Naive thymus-derived CD4-positive, alpha-beta T cell (primary cell): ENCODE measurements at regions of chr9 and their contacts with region 1.

Region 1: GRCh38 chr9:581673-582497 is 259.6 kb upstream of the DMRT1 start:
- DNase-seq: no peak
- ATAC-seq: no peak
- H3K4me3 ChIP-seq: no peak overlapping the region
- H3K4me3 Mint-ChIP-seq: no peak overlapping the region
- H3K27ac ChIP-seq: no peak overlapping the region
- H3K27ac Mint-ChIP-seq: peak overlapping the region in 1 of 9 donors; percentile 48
- H3K4me1 ChIP-seq: no peaks in the 10 kb centered on the region
- H3K4me1 Mint-ChIP-seq: peaks cover 0 to under 1% (median 0%) of the 10 kb centered on the region in 7 donors
- H3K27me3 ChIP-seq: peaks cover 0 to 3% of the 10 kb centered on the region in 2 donors
- H3K27me3 Mint-ChIP-seq: peaks cover 0 to 4% (median 0%) of the 10 kb centered on the region in 5 donors

Region 2: DNA sequence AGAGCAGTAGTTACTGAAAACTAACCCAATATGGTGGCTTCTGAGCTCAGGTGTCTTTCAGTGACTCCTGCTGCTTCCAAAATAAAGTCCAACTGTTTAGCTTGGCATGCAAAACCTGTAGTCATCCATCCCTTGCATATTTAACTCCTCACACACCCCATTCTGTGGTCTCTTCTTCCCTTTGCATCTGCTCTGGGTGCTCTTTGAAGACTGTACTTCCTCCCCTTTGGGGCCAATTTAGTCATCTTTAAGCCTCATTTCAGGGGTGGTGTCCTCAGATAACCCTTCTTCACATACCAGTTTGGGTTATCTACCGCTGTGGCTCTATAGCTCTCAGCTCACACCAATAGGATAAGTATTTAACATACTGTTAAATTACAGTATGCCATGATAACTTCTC is 49.7 kb after region 1 on chr9:
- CTCF ChIA-PET with region 1: no interaction called
- POLR2A ChIA-PET with region 1: no interaction called
- intact Hi-C with region 1: loop called in 1 of 2 experiments (anchors 10 kb)
- DNase-seq: peak in 5 of 9 donors; percentile 1 to 18 (median 6)
- ATAC-seq: no peak
- H3K4me3 ChIP-seq: no peak overlapping the region
- H3K4me3 Mint-ChIP-seq: peak overlapping the region in 7 of 10 donors; percentile 0 to 58 (median 11)
- H3K27ac ChIP-seq: no peak overlapping the region
- H3K27ac Mint-ChIP-seq: no peak overlapping the region
- H3K4me1 ChIP-seq: peaks cover 0 to 9% of the 10 kb centered on the region in 2 donors
- H3K4me1 Mint-ChIP-seq: peaks cover 13 to 30% (median 25%) of the 10 kb centered on the region in 7 donors
- H3K27me3 ChIP-seq: no peaks in the 10 kb centered on the region
- H3K27me3 Mint-ChIP-seq: peaks cover 0 to 3% (median 0%) of the 10 kb centered on the region in 5 donors